ENCODE measurements at regions of chr11 and their contacts with region 1.

Region 1: GRCh38 chr11:8911029-8911826 is at the start of gene AKIP1:
- DNase-seq: peak; percentile 91
- H3K4me3 Mint-ChIP-seq: peak within 1 kb of the TSS; percentile 92
- H3K27ac Mint-ChIP-seq: peak within 1 kb of the TSS; percentile 86
- H3K4me1 Mint-ChIP-seq: peaks cover 44% of the 10 kb centered on the region
- H3K27me3 Mint-ChIP-seq: no peaks in the 10 kb centered on the region
- total RNA-seq, gene AKIP1: 41.5 to 43.9 TPM

Region 2: GRCh38 chr11:8682303-8683114 is 228.7 kb before region 1 on chr11 and contains the starts of genes RPL27A and TRIM66:
- CTCF ChIA-PET with region 1: no interaction called
- intact Hi-C with region 1: loop called (anchors 1 kb)
- DNase-seq: peak; percentile 99
- H3K4me3 Mint-ChIP-seq: peak within 1 kb of the TSS; percentile 91
- H3K27ac Mint-ChIP-seq: peak within 1 kb of the TSS; percentile 92
- H3K4me1 Mint-ChIP-seq: peaks cover 42% of the 10 kb centered on the region
- H3K27me3 Mint-ChIP-seq: no peaks in the 10 kb centered on the region
- total RNA-seq, gene RPL27A: 1,157 to 1,188 TPM
- total RNA-seq, gene TRIM66: 16.4 to 19.1 TPM

Region 3: DNA sequence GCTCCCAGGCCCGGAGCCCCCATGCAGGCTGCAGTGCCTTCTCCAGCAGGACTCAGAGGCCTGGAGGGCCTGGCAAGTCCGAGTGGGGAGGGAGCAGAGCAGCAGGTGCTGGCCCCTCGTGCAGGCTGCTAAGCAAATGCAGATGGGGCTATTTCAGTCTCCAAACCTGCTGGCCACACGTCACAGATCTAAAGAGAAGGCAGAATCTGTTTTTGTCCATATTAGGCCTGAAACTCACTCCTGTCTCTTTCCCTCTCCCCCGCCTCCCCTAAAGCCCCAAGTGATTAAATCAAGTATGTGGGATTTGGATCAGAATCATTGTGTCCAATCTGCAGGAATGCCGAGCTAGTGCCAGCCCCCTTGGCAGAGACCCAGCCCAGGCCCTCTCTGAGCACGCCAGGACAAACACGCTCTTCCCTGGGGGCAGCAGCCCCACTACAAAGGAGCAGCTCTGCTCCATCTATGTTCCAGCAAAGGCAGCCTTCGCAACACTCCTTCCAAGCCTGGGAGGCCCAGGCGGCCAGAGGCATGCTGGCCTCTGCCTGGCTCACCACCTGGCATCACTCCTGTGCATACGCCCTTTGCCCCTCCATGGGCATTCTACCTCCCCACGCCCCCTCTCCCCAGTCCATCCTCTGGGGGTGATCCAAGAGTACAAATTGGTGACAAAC is 202.1 kb before region 1 on chr11:
- CTCF ChIA-PET with region 1: no interaction called
- intact Hi-C with region 1: no loop called
- DNase-seq: no peak
- H3K4me3 Mint-ChIP-seq: no peak overlapping the region
- H3K27ac Mint-ChIP-seq: no peak overlapping the region
- H3K4me1 Mint-ChIP-seq: no peaks in the 10 kb centered on the region
- H3K27me3 Mint-ChIP-seq: no peaks in the 10 kb centered on the region

Region 4: GRCh38 chr11:8832571-8833260 is 78.5 kb before region 1 on chr11:
- CTCF ChIA-PET with region 1: no interaction called
- intact Hi-C with region 1: loop called (anchors 5 kb)
- DNase-seq: peak; percentile 63
- H3K4me3 Mint-ChIP-seq: no peak overlapping the region
- H3K27ac Mint-ChIP-seq: peak overlapping the region; percentile 27
- H3K4me1 Mint-ChIP-seq: peaks cover 8% of the 10 kb centered on the region
- H3K27me3 Mint-ChIP-seq: peaks cover 10% of the 10 kb centered on the region

Region 5: GRCh38 chr11:9003573-9004309 is 92.5 kb after region 1 on chr11 and contains the start of gene NRIP3:
- CTCF ChIA-PET with region 1: interaction called, 3 read pairs
- intact Hi-C with region 1: loop called (anchors 1 kb)
- DNase-seq: peak; percentile 67
- H3K4me3 Mint-ChIP-seq: peak within 1 kb of the TSS; percentile 68
- H3K27ac Mint-ChIP-seq: no peak within 1 kb of the TSS
- H3K4me1 Mint-ChIP-seq: peaks cover 24% of the 10 kb centered on the region
- H3K27me3 Mint-ChIP-seq: peaks cover 33% of the 10 kb centered on the region
- total RNA-seq, gene NRIP3: 3.0 to 3.5 TPM

Region 6: DNA sequence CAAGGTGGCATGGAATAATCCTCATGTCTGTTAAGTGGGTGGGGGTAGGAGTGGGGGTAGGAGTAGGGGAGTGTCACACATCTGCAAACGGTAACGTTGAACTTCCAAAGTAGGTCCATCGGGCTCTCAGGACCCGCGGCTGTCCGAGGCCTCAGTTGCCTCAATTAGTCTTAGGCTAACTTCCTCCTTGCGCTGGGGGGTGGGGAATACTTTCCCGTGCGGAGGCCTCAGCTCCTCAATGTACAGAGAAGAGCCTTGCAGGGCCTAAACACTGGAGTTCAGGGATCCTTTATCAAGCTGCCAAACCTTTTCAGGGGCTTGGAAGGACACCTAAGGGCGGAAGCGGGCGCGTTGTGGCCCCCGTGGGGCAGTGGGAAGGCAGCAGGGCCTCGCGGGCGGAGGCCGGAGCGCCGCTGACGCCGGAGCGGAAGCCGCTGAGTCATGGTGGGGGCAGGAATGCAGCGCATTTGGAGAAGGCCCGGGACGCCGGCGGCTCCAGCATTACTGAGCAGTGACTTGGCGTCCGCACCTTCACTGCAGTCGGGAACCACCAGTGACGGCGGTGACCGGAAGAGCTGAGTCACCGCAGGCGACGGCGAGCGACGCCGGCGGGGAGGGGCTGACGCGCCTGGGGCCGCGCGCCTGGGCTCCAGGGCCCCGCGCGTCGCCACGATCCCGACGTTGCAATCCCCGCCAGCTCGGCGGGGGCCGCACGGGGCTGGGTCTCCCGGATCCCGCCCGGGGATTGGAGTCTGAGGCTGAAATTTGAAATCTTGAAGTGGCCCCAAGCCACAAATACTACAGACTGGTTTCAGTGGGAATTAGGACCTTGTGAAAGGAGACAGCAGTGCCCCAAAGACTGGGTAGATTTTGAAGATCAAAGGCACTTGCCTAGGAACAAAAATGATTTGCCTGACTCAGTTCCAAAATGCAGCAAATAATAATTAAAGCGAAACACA is 453.0 kb after region 1 on chr11:
- CTCF ChIA-PET with region 1: interaction called, 4 read pairs
- intact Hi-C with region 1: loop called (anchors 2 kb)
- DNase-seq: peak; percentile 91
- H3K4me3 Mint-ChIP-seq: peak overlapping the region; percentile 66
- H3K27ac Mint-ChIP-seq: peak overlapping the region; percentile 73
- H3K4me1 Mint-ChIP-seq: peaks cover 35% of the 10 kb centered on the region
- H3K27me3 Mint-ChIP-seq: no peaks in the 10 kb centered on the region

Region 7: GRCh38 chr11:9565822-9566560 is 654.8 kb after region 1 on chr11:
- CTCF ChIA-PET with region 1: no interaction called
- intact Hi-C with region 1: loop called (anchors 10 kb)
- DNase-seq: peak; percentile 81
- H3K4me3 Mint-ChIP-seq: no peak overlapping the region
- H3K27ac Mint-ChIP-seq: peak overlapping the region; percentile 65
- H3K4me1 Mint-ChIP-seq: peaks cover 9% of the 10 kb centered on the region
- H3K27me3 Mint-ChIP-seq: no peaks in the 10 kb centered on the region

Measured in activated naive CD4-positive, alpha-beta T cell treated with anti-CD3 and anti-CD28 coated beads for 36 hours (primary cell).